Activated naive CD4-positive, alpha-beta T cell treated with anti-CD3 and anti-CD28 coated beads for 36 hours (primary cell): ENCODE measurements at regions of chr15 and their contacts with region 1.

Region 1: DNA sequence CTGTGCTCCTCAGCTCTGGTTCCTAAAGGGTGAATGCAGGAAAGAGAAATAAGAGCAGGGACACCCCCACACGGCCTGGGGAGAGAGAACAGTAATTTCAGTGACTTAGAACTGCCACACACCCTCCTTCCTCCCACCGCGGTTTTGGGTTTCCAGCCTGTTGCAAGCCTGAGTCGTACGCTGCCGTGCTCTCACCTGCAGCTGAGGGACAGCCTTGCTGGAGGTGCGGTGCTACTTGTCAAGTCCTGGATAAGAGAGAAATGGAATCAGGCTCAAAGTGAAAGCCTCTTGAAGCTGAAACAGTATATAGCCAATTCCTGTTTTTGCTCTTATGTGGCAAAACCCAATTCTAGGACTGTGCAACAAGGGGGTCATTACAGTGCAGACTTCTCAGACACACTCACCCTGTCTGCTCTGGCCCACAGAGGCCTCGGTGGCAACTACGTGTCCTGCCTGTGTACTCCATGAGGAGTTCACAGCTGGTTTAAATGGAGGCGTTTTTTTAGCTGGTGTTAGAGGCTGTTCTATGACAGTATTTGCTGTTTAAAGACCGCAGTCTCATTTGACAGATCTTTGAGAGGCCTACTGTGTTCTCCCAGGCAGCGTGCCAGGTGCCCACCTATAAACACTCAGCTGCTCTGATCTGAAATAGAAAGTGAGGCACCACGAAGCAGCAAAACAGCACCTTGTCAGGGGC is 42.9 kb downstream of the TBC1D2B start:
- DNase-seq: peak; percentile 97
- H3K4me3 Mint-ChIP-seq: peak overlapping the region; percentile 38
- H3K27ac Mint-ChIP-seq: peak overlapping the region; percentile 65
- H3K4me1 Mint-ChIP-seq: peaks cover 78% of the 10 kb centered on the region
- H3K27me3 Mint-ChIP-seq: no peaks in the 10 kb centered on the region

Region 2: DNA sequence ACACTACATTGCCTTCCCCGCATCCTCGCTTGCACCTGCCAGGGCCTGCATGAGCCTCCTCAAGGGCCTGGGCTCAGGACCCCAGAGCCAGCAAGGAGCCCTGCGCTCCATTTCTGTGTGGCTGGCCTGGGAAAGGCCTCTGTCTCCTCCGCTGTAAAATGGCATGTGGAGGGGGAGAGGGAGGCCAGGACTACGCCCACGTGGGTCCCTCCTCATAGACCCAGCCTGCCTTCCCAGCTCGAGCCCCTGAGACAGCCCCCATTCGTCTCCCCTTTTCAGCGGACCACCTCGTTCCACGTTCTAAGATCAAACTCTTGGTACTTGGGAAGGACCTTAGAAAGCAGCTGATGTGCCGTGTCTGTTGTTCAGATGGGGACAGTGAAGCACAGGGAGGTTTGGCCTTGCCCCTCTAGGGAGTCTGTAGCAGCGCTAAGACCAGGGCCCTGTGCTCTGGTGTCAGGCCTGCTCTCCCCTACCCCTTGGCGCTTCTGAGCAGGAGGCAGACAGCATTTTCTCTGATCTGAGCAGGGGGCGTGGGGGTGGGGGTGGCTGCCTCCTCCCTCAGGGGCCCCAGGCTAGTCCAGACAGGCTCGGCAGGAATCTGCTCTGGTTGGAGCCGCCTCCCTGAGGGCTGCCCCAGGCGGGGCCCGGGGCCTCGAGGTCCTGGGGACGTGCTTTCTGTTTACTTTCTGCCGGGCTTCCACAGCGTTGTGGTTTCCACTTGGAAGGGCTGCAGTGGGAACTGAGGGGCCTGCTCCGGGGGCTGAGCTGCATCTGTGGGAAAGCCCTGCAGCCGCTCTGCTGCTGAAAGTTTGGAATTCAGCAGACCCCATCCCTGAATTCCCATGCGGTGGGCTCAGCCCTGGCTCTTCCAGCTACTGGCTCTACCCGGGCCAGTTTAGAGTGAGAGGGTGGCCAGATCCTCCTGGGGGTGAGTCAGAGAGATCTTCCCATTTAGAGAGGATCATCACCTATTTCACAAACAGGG is 507.6 kb before region 1 on chr15:
- CTCF ChIA-PET with region 1: no interaction called
- intact Hi-C with region 1: no loop called
- DNase-seq: no peak
- H3K4me3 Mint-ChIP-seq: no peak overlapping the region
- H3K27ac Mint-ChIP-seq: no peak overlapping the region
- H3K4me1 Mint-ChIP-seq: no peaks in the 10 kb centered on the region
- H3K27me3 Mint-ChIP-seq: no peaks in the 10 kb centered on the region

Region 3: DNA sequence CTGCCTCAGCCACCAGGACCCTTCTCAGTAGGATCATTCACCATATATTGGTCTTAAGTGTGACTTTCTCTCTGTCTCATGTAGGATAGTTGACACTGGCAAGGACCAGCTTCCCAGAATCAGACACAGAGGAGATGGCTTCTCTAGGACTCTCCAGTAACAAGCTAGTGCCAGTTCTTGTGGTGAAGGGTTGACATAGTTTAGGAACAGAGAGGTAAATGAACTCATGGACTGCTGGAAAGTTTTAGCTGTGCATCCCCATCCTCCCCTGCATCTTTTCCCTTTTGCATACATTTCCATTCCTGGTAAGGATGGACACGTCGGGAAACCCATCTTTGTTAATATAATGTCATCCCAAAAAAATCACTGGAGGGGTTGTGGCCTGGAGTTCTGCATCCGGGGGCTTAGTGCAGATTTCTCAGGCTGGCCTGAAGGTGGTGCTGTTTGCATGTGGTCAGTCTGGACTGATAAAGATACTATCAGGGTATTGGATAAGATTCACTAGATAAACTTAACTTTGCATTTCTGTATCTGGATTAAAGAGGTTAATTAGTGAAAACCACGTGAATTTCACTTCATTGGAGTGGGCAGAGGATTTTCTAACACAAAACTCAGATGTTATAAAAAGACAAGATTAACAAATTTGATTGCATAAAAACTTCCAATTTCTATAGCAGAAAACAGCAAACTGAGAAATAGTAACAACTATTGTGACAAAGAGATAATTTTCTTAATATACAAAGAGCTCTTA is 67.9 kb before region 1 on chr15:
- CTCF ChIA-PET with region 1: interaction called, 8 read pairs
- intact Hi-C with region 1: loop called (anchors 5 kb)
- DNase-seq: peak; percentile 76
- H3K4me3 Mint-ChIP-seq: no peak overlapping the region
- H3K27ac Mint-ChIP-seq: no peak overlapping the region
- H3K4me1 Mint-ChIP-seq: no peaks in the 10 kb centered on the region
- H3K27me3 Mint-ChIP-seq: no peaks in the 10 kb centered on the region

Region 4: GRCh38 chr15:78065973-78066946 is 31.6 kb after region 1 on chr15:
- CTCF ChIA-PET with region 1: interaction called, 5 read pairs
- intact Hi-C with region 1: loop called (anchors 1 kb)
- DNase-seq: no peak
- H3K4me3 Mint-ChIP-seq: no peak overlapping the region
- H3K27ac Mint-ChIP-seq: peak overlapping the region; percentile 34
- H3K4me1 Mint-ChIP-seq: peaks cover 12% of the 10 kb centered on the region
- H3K27me3 Mint-ChIP-seq: no peaks in the 10 kb centered on the region